Endothelial cell of umbilical vein (primary cell): ENCODE measurements at regions of chr3 and their contacts with region 1.

Region 1: GRCh38 chr3:62607287-62608029 is 234.1 kb upstream of the FEZF2 start:
- DNase-seq: peak; percentile 85
- H3K4me3 ChIP-seq: no peak overlapping the region
- H3K27ac ChIP-seq: peak overlapping the region; percentile 77
- H3K4me1 ChIP-seq: peaks cover 52% of the 10 kb centered on the region
- H3K27me3 ChIP-seq: no peaks in the 10 kb centered on the region
- CTCF ChIP-seq: no peak
- POLR2A ChIP-seq: no peak

Region 2: GRCh38 chr3:61251174-61251972 is 1356.1 kb before region 1 on chr3 and contains the start of gene FHIT:
- CTCF ChIA-PET with region 1: no interaction called
- POLR2A ChIA-PET with region 1: no interaction called
- dilution Hi-C with region 1: no loop called
- intact Hi-C with region 1: loop called (anchors 10 kb)
- DNase-seq: peak; percentile 95
- H3K4me3 ChIP-seq: peak within 1 kb of the TSS; percentile 62 to 99 (median 94)
- H3K27ac ChIP-seq: peak within 1 kb of the TSS; percentile 65
- H3K4me1 ChIP-seq: peaks cover 31% of the 10 kb centered on the region
- H3K27me3 ChIP-seq: no peaks in the 10 kb centered on the region
- CTCF ChIP-seq: no peak
- POLR2A ChIP-seq: no peak
- total RNA-seq, gene FHIT: 2.2 and 3.1 TPM in 2 replicates

Region 3: GRCh38 chr3:62318750-62319569 is 288.5 kb before region 1 on chr3:
- CTCF ChIA-PET with region 1: no interaction called
- POLR2A ChIA-PET with region 1: no interaction called
- dilution Hi-C with region 1: no loop called
- intact Hi-C with region 1: loop called (anchors 2 kb)
- DNase-seq: peak; percentile 81
- H3K4me3 ChIP-seq: peak overlapping the region; percentile 71 to 85 (median 81)
- H3K27ac ChIP-seq: peak overlapping the region; percentile 39
- H3K4me1 ChIP-seq: peaks cover 9% of the 10 kb centered on the region
- H3K27me3 ChIP-seq: no peaks in the 10 kb centered on the region
- CTCF ChIP-seq: no peak
- POLR2A ChIP-seq: no peak

Region 4: DNA sequence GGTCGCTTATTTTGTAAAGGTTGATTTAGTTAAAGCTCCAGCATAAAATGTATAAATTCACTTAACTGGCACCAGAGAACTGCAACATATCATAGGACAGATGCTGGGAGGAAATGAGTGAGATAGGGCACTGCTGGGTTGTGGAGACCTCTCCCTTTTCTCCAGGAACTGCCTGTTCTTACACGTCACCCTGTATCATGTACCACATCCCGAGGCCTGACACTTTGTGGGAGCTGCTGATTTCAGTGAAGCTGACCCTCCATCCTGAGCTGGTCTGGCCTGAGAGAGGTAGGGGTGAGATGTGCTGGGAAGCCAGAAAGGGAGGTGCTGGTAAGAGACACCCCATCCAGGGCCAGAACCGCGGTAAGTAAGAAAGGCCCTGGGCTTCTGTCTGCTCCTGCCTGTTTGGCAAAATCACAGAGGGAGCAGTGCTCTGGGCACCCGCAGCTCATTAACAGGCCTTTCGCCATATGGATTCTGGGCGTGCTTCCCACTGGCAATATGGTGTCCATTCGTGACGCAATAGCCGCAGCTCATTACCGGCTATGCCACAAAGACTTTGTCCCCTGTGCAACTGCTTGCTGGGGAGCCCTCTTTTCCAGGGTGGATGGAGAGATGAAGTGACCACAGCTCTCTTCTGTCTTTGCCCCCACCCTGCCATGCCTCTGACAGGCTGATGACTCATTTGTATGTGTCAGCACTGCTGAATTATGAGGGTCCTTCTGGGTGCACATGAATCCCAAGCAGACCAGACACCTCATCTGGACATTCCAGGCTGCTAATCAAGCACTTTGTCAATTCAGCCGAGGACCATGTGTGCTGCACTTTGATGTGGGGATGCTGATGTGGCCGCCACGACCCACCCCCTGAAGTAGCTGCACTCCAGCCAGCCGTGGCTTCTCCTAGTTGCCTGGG is 20.0 kb before region 1 on chr3:
- CTCF ChIA-PET with region 1: interaction called, 18 read pairs
- POLR2A ChIA-PET with region 1: interaction called, 5 read pairs
- dilution Hi-C with region 1: no loop called
- intact Hi-C with region 1: no loop called
- DNase-seq: peak; percentile 72
- H3K4me3 ChIP-seq: no peak overlapping the region
- H3K27ac ChIP-seq: peak overlapping the region; percentile 79
- H3K4me1 ChIP-seq: peaks cover 38% of the 10 kb centered on the region
- H3K27me3 ChIP-seq: no peaks in the 10 kb centered on the region
- CTCF ChIP-seq: no peak
- POLR2A ChIP-seq: peak; percentile 69